ENCODE measurements at regions of chr13 and their contacts with region 1.

Region 1: DNA sequence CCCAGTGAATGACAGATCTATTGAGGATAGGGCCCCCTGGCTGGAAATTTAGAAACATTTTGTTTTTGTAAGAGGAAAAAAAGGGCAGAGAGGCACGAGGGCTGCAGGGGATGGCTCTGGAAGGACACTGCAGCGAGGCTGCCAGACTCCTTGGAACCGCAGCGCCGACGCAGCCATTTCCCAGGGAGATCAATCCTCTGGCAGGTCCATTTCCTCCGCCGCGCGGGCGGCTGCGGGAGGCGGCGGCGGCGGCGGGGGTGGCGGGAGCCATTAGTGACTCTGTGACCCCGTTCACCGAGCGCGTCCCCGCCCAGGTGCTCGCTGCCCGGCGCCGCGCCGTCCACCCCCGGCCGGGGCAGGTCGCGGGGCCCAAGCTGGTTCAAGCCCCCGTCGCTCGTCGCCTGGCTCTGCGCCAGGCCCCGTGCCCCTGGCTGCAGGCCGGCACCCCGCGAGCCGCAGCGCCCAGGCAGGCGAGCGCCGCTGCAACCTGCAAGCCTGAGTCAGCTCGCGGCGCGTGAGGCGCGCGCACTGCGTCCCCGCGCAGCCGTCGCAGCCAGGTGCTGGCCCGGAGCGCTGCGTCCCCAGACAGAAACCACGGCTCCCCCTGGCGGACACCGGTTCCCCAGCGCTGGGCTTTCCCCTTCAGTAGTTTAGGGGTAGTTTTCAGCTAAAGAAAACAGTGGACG is 192.6 kb downstream of the KATNAL1 start:
- DNase-seq: peak; percentile 95

Region 2: GRCh38 chr13:29508130-29508875 is 606.4 kb before region 1 on chr13:
- intact Hi-C with region 1: loop called (anchors 5 to 10 kb)
- DNase-seq: peak; percentile 93

Region 3: GRCh38 chr13:29513397-29514322 is 601.1 kb before region 1 on chr13:
- intact Hi-C with region 1: loop called (anchors 5 to 10 kb)
- DNase-seq: no peak

Region 4: GRCh38 chr13:29595380-29596063 is 519.2 kb before region 1 on chr13 and contains the start of gene SLC7A1:
- intact Hi-C with region 1: loop called in 1 of 2 experiments (anchors 10 kb)
- DNase-seq: peak; percentile 92
- total RNA-seq, gene SLC7A1: 47.7 to 63.5 TPM

Region 5: GRCh38 chr13:29771247-29771646 is 343.5 kb before region 1 on chr13:
- intact Hi-C with region 1: loop called in 1 of 2 experiments (anchors 2 kb)
- DNase-seq: no peak

Region 6: GRCh38 chr13:29782798-29783197 is 331.9 kb before region 1 on chr13:
- intact Hi-C with region 1: loop called in 1 of 2 experiments (anchors 10 kb)
- DNase-seq: no peak

Region 7: GRCh38 chr13:29850224-29850898 is 264.4 kb before region 1 on chr13 and contains the start of gene UBL3:
- intact Hi-C with region 1: loop called in 1 of 2 experiments (anchors 10 kb)
- DNase-seq: peak; percentile 99
- total RNA-seq, gene UBL3: 29.6 to 32.9 TPM

Measured in posterior vena cava (tissue), 2 donors.